ENCODE measurements at regions of chr17 and their contacts with region 1.

Region 1: GRCh38 chr17:60398227-60398959 is 6.5 kb upstream of the USP32 start:
- DNase-seq: peak; percentile 36
- ATAC-seq: peak; percentile 95
- H3K4me3 Mint-ChIP-seq: peak overlapping the region; percentile 55
- H3K27ac Mint-ChIP-seq: peak overlapping the region; percentile 64
- H3K4me1 Mint-ChIP-seq: peaks cover 74% of the 10 kb centered on the region
- H3K27me3 Mint-ChIP-seq: no peaks in the 10 kb centered on the region
- CTCF ChIP-seq: no peak

Region 2: GRCh38 chr17:60077672-60078519 is 320.5 kb before region 1 on chr17:
- CTCF ChIA-PET with region 1: no interaction called
- POLR2A ChIA-PET with region 1: interaction called, 5 read pairs
- intact Hi-C with region 1: loop called (anchors 5 kb)
- DNase-seq: no peak
- ATAC-seq: peak; percentile 51
- H3K4me3 Mint-ChIP-seq: peak overlapping the region; percentile 94
- H3K27ac Mint-ChIP-seq: peak overlapping the region; percentile 86
- H3K4me1 Mint-ChIP-seq: peaks cover 40% of the 10 kb centered on the region
- H3K27me3 Mint-ChIP-seq: no peaks in the 10 kb centered on the region
- CTCF ChIP-seq: no peak

Region 3: DNA sequence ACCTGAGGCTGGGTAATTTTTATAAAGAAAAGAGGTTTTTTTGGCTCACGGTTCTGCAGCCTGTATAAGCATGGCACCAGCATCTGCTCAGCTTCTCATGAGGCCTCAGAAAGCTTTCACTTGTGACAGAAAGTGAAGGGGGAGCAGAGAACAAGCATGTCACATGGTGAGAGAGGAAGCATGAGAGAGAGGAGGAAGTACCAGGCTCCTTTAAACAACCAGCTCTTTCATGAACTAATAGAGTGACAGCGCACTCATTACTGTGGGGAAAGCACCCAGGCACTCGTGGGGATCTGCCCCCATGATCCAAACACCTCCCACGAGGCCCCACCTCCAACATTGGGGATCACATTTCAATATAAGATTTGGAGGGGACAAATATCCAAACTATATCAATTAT is 93.3 kb before region 1 on chr17:
- CTCF ChIA-PET with region 1: no interaction called
- POLR2A ChIA-PET with region 1: interaction called, 4 read pairs
- intact Hi-C with region 1: loop called (anchors 1 kb)
- DNase-seq: no peak
- ATAC-seq: peak; percentile 98
- H3K4me3 Mint-ChIP-seq: peak overlapping the region; percentile 63
- H3K27ac Mint-ChIP-seq: peak overlapping the region; percentile 82
- H3K4me1 Mint-ChIP-seq: peaks cover 26% of the 10 kb centered on the region
- H3K27me3 Mint-ChIP-seq: no peaks in the 10 kb centered on the region
- CTCF ChIP-seq: no peak

Region 4: GRCh38 chr17:60356940-60357339 is 41.5 kb before region 1 on chr17:
- CTCF ChIA-PET with region 1: no interaction called
- POLR2A ChIA-PET with region 1: no interaction called
- intact Hi-C with region 1: loop called (anchors 5 kb)
- DNase-seq: no peak
- ATAC-seq: no peak
- H3K4me3 Mint-ChIP-seq: no peak overlapping the region
- H3K27ac Mint-ChIP-seq: no peak overlapping the region
- H3K4me1 Mint-ChIP-seq: peaks cover 20% of the 10 kb centered on the region
- H3K27me3 Mint-ChIP-seq: no peaks in the 10 kb centered on the region
- CTCF ChIP-seq: no peak

Region 5: GRCh38 chr17:60421273-60421934 is 23.0 kb after region 1 on chr17:
- CTCF ChIA-PET with region 1: interaction called, 7 read pairs
- POLR2A ChIA-PET with region 1: interaction called, 6 read pairs
- intact Hi-C with region 1: loop called (anchors 1 kb)
- DNase-seq: peak; percentile 79
- ATAC-seq: peak; percentile 93
- H3K4me3 Mint-ChIP-seq: peak overlapping the region; percentile 85
- H3K27ac Mint-ChIP-seq: peak overlapping the region; percentile 74
- H3K4me1 Mint-ChIP-seq: peaks cover 8% of the 10 kb centered on the region
- H3K27me3 Mint-ChIP-seq: no peaks in the 10 kb centered on the region
- CTCF ChIP-seq: peak; percentile 100

Measured in activated B cell treated with CpG ODN at 0.5 μM for 24 hours (primary cell).